ENCODE measurements at regions of chr5 and their contacts with region 1.

Region 1: DNA sequence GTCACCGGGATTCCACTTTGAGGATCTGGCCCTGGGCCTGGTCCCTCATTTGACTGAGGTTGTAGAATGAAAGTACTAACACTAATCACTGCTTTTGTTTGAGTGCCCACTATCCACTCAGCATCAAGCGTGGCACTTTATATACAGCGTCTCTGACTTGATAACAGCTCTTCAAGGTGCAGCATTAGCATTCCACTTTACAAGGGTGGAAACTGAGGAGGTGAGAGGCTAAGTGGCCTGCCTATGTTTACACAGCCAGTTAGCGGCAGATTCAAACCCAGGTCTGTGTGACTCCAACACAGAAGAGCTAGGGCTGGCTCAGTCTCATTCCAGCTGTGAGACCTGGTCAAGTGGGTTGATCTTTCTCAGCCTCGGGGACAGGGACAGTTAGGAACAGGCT is 5.9 kb downstream of the KCNMB1 start:
- DNase-seq: no peak
- ATAC-seq: no peak
- H3K4me3 Mint-ChIP-seq: no peak overlapping the region
- H3K27ac Mint-ChIP-seq: no peak overlapping the region
- H3K4me1 Mint-ChIP-seq: peaks cover 0 to 4% (median 0%) of the 10 kb centered on the region in 4 donors
- H3K27me3 Mint-ChIP-seq: peaks cover 0 to 9% (median 2%) of the 10 kb centered on the region in 5 donors

Region 2: DNA sequence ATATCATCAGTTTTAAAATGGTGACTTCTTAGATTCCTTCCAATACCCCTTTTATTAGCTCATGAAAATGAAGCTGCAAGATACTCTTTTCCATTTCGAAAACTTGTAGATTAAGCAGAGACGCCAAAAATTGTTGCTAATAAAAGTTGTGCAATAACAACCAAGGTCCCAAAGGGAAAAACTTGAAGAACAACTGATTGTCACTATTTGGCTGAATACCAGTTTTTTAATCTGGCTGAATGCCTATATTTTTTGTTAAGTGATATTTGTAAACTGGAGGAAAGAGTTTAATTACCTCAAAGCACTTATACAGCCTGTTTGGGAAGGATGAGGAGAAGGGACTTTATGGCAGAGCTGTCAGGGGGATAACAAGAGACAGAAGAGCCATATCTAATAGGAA is 135.9 kb before region 1 on chr5:
- POLR2A ChIA-PET with region 1: interaction called, 13 read pairs
- DNase-seq: no peak
- ATAC-seq: no peak
- H3K4me3 Mint-ChIP-seq: peak overlapping the region in 1 of 10 donors; percentile 28
- H3K27ac Mint-ChIP-seq: peak overlapping the region in 5 of 10 donors; percentile 48 to 71 (median 59)
- H3K4me1 Mint-ChIP-seq: peaks cover 7 to 28% (median 16%) of the 10 kb centered on the region in 4 donors
- H3K27me3 Mint-ChIP-seq: no peaks in the 10 kb centered on the region

Region 3: GRCh38 chr5:170302653-170303501 is 80.3 kb before region 1 on chr5:
- POLR2A ChIA-PET with region 1: no interaction called
- DNase-seq: peak; percentile 44 to 87 (median 80)
- ATAC-seq: peak; percentile 93 to 97
- H3K4me3 Mint-ChIP-seq: peak overlapping the region; percentile 78 to 96 (median 89)
- H3K27ac Mint-ChIP-seq: peak overlapping the region; percentile 89 to 99 (median 96)
- H3K4me1 Mint-ChIP-seq: peaks cover 36 to 91% (median 86%) of the 10 kb centered on the region in 4 donors
- H3K27me3 Mint-ChIP-seq: no peaks in the 10 kb centered on the region

Region 4: GRCh38 chr5:170313344-170313743 is 69.9 kb before region 1 on chr5:
- POLR2A ChIA-PET with region 1: no interaction called
- DNase-seq: peak in 5 of 10 donors; percentile 27 to 57 (median 45)
- ATAC-seq: peak; percentile 78 to 80
- H3K4me3 Mint-ChIP-seq: peak overlapping the region; percentile 31 to 82 (median 78)
- H3K27ac Mint-ChIP-seq: peak overlapping the region; percentile 85 to 96 (median 92)
- H3K4me1 Mint-ChIP-seq: peaks cover 41 to 87% (median 68%) of the 10 kb centered on the region in 4 donors
- H3K27me3 Mint-ChIP-seq: no peaks in the 10 kb centered on the region

Measured in naive thymus-derived CD8-positive, alpha-beta T cell (primary cell).